WTC11 (cell line): ENCODE measurements at regions of chr14 and their contacts with region 1.

Region 1: DNA sequence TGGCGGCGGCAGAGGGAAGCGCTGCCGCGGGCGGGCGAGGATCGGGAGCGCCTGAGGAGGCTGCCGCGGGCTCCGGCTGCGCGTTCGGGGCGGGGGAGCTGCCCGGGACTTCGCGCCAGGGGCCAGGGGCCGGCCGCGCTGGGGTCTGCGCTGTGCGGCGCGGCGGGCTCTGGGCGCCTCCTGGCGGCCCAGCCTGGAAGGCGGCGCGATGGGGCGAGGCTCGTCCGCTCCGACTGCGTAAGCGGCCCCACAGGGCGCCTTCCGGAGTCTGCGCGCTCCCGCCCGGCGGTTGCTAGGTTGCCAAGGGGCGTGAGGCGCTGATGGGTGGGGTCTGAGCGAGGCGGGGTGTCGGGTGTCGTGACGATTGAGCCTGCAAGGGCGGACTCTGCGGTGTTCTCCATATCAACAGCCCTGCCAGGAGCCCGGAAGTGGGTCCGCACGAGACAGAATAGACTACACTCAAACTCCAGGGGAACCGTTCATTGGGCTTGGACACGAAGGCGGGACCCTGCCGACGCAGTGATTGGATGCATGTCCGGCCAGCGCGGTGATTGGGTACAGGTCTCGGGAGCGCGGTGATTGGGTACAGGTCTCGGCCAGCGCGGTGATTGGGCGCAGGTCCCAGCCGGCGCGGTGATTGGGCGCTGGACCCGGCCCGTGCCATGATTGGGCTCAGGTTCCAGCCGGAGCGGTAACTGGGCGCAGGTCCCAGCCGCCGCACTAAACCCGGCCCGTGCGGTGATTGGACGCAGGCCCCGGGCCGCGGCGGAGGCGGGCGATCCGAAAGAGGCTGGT is at the start of gene TEDC1:
- DNase-seq: peak; percentile 97
- ATAC-seq: peak; percentile 82
- H3K4me3 Mint-ChIP-seq: peak within 1 kb of the TSS; percentile 71
- H3K27ac Mint-ChIP-seq: no peak within 1 kb of the TSS; the same call in none of the 2 replicates
- H3K4me1 Mint-ChIP-seq: peaks cover 4% of the 10 kb centered on the region
- H3K27me3 Mint-ChIP-seq: peaks cover 38% of the 10 kb centered on the region
- CTCF ChIP-seq: peak; percentile 52; the same call in 1 of the 2 replicates
- total RNA-seq, gene TEDC1: 16.4 to 17.9 TPM (median 16.7 TPM) in 3 replicates

Region 2: DNA sequence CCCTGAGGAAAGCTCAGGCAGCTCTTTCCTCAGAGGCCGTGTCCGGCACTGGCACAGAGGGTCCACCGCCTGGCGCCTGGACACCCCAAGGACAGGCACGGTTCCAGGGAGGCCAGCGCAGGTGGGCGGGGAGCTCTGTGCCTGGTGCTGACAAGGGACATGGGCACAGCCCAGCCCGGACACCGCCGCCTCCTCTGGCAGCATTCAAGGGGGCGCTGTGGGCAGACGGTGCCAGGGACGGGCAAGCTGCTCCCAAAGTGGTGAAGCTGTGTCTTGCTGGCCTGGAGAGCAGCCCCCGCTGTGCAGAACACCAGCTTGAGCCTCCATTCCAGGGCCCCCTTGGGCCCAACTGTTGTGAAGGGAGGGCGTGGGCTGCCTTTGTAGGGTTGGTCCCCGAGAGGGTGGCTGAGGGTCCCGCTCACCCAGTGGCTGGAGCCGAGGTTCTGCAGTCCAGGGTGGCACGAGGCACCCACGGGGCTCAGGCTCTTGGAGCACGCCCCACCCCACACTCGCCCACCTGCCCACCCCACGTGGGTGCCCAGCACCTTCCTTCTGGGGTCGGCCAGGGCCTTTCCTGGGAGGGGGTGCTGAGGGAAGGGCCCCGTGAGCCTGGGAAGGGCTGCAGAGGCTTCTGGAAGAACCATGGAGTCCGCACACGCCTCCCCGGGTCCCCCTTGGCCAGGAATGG is 121.7 kb before region 1 on chr14:
- CTCF ChIA-PET with region 1: interaction called, 49 read pairs
- POLR2A ChIA-PET with region 1: interaction called, 5 read pairs
- DNase-seq: no peak
- ATAC-seq: no peak
- H3K4me3 Mint-ChIP-seq: no peak overlapping the region
- H3K27ac Mint-ChIP-seq: no peak overlapping the region
- H3K4me1 Mint-ChIP-seq: no peaks in the 10 kb centered on the region
- H3K27me3 Mint-ChIP-seq: peaks cover 6% of the 10 kb centered on the region
- CTCF ChIP-seq: no peak

Region 3: DNA sequence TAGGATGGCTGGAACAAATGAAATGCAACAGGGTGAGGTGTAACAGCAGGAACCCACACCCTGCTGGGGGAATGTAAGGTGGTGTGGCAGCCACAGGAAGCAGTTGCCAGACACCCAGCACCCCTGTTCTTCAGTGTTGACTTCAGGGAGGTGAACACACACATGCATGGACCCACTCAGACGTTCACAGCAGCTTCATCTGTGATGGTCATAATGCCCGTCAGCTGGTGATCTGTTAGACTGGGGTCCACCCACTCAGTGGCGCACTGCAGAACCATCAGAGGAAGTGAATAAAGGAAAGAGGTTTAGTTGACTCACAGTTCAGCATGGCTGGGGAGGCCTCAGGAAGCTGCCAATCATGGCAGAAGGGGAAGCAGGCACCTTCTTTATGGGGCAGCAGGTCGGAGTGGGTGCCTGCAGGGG is 115.1 kb before region 1 on chr14:
- CTCF ChIA-PET with region 1: interaction called, 49 read pairs
- POLR2A ChIA-PET with region 1: interaction called, 5 read pairs
- DNase-seq: no peak
- ATAC-seq: no peak
- H3K4me3 Mint-ChIP-seq: no peak overlapping the region
- H3K27ac Mint-ChIP-seq: no peak overlapping the region
- H3K4me1 Mint-ChIP-seq: peaks cover 11% of the 10 kb centered on the region
- H3K27me3 Mint-ChIP-seq: peaks cover 15% of the 10 kb centered on the region
- CTCF ChIP-seq: no peak

Region 4: DNA sequence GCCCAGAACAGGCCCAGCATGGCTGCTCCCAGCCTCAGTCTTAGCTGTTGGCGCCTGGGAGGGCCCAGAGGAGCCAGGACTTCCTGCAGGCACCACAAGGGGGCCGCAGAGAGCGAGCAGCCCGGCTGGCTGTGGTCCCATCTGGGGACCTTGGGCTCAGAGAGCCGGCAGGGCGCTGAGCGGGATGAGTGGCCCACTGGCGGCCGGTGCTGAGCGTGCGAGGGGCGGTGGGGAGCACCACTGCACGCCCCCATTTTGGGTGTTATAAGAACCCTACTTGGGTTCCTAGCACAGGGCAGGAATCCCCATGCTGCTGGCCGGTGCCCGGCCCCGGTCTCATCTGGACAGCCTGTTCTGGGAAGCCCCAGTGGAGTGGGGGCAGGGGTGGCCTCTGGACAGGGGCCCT is 42.1 kb before region 1 on chr14:
- CTCF ChIA-PET with region 1: interaction called, 13 read pairs
- POLR2A ChIA-PET with region 1: no interaction called
- DNase-seq: peak; percentile 83
- ATAC-seq: peak; percentile 91
- H3K4me3 Mint-ChIP-seq: no peak overlapping the region
- H3K27ac Mint-ChIP-seq: no peak overlapping the region
- H3K4me1 Mint-ChIP-seq: no peaks in the 10 kb centered on the region
- H3K27me3 Mint-ChIP-seq: no peaks in the 10 kb centered on the region
- CTCF ChIP-seq: peak; percentile 77

Region 5: GRCh38 chr14:105473677-105474482 is 16.9 kb before region 1 on chr14:
- CTCF ChIA-PET with region 1: interaction called, 49 read pairs
- POLR2A ChIA-PET with region 1: no interaction called
- DNase-seq: peak; percentile 99
- ATAC-seq: peak; percentile 64
- H3K4me3 Mint-ChIP-seq: peak overlapping the region; percentile 56
- H3K27ac Mint-ChIP-seq: no peak overlapping the region
- H3K4me1 Mint-ChIP-seq: 0 out of 2 replicates have a peak, but pooled peaks cover 3% of the 10 kb centered on the region
- H3K27me3 Mint-ChIP-seq: peaks cover 34% of the 10 kb centered on the region
- CTCF ChIP-seq: no peak

Region 6: GRCh38 chr14:105507247-105507646 is 16.5 kb after region 1 on chr14:
- CTCF ChIA-PET with region 1: interaction called, 10 read pairs
- POLR2A ChIA-PET with region 1: no interaction called
- DNase-seq: no peak
- ATAC-seq: no peak
- H3K4me3 Mint-ChIP-seq: no peak overlapping the region
- H3K27ac Mint-ChIP-seq: no peak overlapping the region
- H3K4me1 Mint-ChIP-seq: no peaks in the 10 kb centered on the region
- H3K27me3 Mint-ChIP-seq: peaks cover 8% of the 10 kb centered on the region
- CTCF ChIP-seq: no peak

Region 7: DNA sequence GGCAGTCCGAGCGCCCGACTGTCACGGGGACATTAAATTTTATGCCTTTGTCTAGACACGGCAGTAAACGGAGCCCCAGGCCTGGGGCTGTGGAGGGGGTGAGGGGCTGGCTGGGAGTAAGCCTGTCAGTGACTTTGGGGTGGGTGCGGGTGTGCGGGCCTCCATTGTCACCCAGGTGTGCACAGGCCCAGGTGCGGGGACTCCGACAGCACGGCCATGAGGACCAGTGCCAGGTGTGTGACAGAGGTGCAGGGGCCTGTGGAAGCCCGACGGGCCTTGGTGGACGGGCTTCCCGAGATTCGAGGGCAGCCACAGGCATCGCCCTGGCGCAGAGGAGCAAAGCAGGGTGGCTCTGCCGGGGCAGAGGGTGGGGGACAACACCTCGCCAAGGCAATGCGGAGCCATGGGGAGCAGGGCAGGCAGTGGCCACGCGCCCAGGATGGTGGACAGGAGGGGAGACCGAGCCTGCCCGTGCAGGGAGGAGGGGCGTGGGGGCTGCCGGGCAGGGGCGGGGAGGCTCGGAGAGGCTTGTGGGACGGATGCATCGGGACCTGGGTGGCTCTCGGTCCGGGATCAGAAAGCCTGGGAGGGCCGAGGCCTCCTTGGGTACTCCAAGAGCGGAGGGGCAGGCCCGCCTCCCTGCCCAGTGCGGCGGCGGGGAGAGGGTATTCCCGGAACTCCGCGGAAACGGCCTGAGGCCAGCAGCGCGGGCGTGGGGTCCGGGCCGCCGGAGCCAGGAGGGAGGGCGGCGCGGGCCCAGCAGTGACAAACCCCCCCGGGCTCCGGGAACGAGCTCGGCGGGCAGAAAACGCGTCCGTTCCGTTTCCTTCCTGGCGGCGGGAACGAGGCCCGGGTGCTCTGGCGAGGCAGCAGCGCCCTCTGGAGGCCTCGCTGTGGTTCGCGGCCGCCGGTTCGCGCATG is 37.2 kb after region 1 on chr14:
- CTCF ChIA-PET with region 1: interaction called, 11 read pairs
- POLR2A ChIA-PET with region 1: no interaction called
- DNase-seq: peak; percentile 75
- ATAC-seq: peak; percentile 60
- H3K4me3 Mint-ChIP-seq: peak overlapping the region; percentile 35
- H3K27ac Mint-ChIP-seq: no peak overlapping the region
- H3K4me1 Mint-ChIP-seq: no peaks in the 10 kb centered on the region
- H3K27me3 Mint-ChIP-seq: peaks cover 55% of the 10 kb centered on the region
- CTCF ChIP-seq: peak; percentile 49

Region 8: DNA sequence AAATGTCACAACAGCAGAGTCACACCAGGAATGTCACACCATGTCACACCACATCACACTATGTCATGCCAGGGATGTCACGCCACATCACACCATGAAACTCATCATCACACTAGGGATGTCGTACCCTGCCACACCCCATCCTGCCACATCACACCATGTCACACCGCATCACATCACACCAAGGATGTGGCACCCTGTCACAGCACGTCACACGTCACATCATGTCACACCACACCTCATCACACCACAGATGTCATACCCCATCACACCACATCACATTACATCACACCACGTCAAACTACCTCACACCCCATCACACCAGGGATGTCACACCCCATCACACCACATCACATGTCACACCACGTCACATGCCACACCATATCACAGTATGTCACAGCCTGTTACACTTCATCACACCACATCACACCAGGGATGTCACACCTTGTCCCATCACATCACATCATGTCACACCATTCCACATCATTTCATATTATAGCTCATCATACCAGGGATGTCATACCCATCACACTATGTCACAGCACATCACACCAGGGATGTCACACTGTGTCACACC is 126.5 kb after region 1 on chr14:
- CTCF ChIA-PET with region 1: no interaction called
- POLR2A ChIA-PET with region 1: no interaction called
- DNase-seq: no peak
- ATAC-seq: no peak
- H3K4me3 Mint-ChIP-seq: no peak overlapping the region
- H3K27ac Mint-ChIP-seq: no peak overlapping the region
- H3K4me1 Mint-ChIP-seq: no peaks in the 10 kb centered on the region
- H3K27me3 Mint-ChIP-seq: peaks cover 13% of the 10 kb centered on the region
- CTCF ChIP-seq: no peak